AG04449 (cell line): ENCODE measurements at regions of chr20 and their contacts with region 1.

Region 1: DNA sequence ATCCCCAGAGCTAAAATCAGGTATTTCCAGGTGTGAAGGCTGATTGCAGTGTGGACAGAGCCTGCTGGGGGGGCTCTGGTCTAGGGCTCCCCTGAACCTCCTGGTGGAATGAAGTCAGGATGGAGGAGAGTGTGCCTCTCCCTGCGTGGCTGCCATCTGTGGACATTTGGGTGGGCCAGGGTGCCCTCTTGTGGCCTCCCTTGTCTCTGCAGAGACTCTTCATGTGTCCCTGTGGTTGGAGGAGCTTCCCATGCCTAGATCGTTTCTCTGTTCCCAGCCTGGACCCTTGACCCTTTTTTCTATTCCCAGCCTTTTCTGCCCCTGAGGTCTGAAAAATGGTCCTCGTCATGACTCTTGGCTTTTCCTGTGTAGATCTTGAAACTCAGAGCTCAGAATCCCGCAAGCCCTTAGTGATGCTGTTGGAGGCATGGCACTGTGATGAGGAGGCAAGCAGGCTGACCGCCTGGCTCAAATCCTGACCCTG is 9.9 kb upstream of the PSMF1 start:
- DNase-seq: no peak
- H3K4me3 ChIP-seq: no peak overlapping the region
- CTCF ChIP-seq: peak; percentile 87

Region 2: GRCh38 chr20:1087311-1087905 is 21.1 kb before region 1 on chr20:
- CTCF ChIA-PET with region 1: interaction called, 30 read pairs
- POLR2A ChIA-PET with region 1: no interaction called
- DNase-seq: no peak
- H3K4me3 ChIP-seq: no peak overlapping the region
- CTCF ChIP-seq: no peak

Region 3: GRCh38 chr20:1094751-1095150 is 13.7 kb before region 1 on chr20:
- CTCF ChIA-PET with region 1: interaction called, 30 read pairs
- POLR2A ChIA-PET with region 1: no interaction called
- DNase-seq: no peak
- H3K4me3 ChIP-seq: no peak overlapping the region
- CTCF ChIP-seq: no peak

Region 4: GRCh38 chr20:1118336-1119127 is 10.1 kb after region 1 on chr20 and contains the start of gene PSMF1:
- CTCF ChIA-PET with region 1: interaction called, 38 read pairs
- POLR2A ChIA-PET with region 1: no interaction called
- DNase-seq: peak; percentile 36
- H3K4me3 ChIP-seq: peak within 1 kb of the TSS; percentile 99
- CTCF ChIP-seq: no peak